Left colon (tissue), 2 donors: ENCODE measurements at regions of chr17 and their contacts with region 1.

Region 1: DNA sequence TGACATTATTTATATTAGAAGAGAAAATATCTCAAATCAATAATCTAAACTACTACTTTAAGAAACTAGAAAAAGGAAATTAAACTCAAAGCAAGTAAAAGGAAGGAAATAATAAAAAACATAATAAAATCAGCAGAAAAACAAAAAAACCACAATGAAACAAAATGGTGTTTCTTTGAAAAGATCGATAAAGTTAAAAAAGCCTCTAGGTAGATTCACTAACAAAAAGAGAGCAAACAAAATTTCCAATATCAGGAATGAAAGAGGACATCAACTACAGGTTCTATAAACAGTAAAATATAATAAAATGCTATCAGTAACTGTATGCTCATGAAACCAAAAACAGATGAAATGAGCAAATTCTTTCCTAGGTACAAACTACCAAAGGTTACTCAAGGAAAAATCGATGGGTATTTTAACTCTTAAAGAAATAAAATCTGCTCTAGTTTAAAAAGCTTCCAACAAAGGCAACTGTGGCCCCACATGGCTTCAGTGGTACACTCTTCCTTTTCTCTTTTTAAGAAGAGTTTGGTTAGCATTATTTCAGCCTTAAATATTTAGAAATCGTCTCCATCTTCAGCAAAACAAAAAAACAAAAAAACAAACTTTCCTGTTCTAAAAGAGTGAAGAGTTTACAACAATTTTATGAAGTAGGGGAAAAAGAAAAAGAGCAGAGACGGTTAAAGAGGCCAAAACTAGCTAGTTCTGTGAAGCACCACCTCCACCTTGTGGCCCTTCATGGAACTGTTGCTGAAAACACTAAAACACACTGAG is 102.2 kb downstream of the TRIM37 start:
- DNase-seq: peak in 1 of 2 donors; percentile 68
- ATAC-seq: peak; percentile 79

Region 2: GRCh38 chr17:58517734-58518609 is 486.6 kb before region 1 on chr17:
- intact Hi-C with region 1: loop called in 1 of 2 experiments (anchors 10 kb)
- DNase-seq: peak; percentile 99 to 100
- ATAC-seq: peak; percentile 74

Region 3: GRCh38 chr17:58587702-58588254 is 416.7 kb before region 1 on chr17:
- intact Hi-C with region 1: loop called in 1 of 2 experiments (anchors 10 kb)
- DNase-seq: peak; percentile 24 to 41
- ATAC-seq: peak; percentile 75

Region 4: GRCh38 chr17:58710936-58711775 is 293.4 kb before region 1 on chr17:
- intact Hi-C with region 1: loop called (anchors 5 to 10 kb)
- DNase-seq: peak in 1 of 2 donors; percentile 46
- ATAC-seq: no peak